ENCODE measurements at regions of chr5 and their contacts with region 1.

Region 1: DNA sequence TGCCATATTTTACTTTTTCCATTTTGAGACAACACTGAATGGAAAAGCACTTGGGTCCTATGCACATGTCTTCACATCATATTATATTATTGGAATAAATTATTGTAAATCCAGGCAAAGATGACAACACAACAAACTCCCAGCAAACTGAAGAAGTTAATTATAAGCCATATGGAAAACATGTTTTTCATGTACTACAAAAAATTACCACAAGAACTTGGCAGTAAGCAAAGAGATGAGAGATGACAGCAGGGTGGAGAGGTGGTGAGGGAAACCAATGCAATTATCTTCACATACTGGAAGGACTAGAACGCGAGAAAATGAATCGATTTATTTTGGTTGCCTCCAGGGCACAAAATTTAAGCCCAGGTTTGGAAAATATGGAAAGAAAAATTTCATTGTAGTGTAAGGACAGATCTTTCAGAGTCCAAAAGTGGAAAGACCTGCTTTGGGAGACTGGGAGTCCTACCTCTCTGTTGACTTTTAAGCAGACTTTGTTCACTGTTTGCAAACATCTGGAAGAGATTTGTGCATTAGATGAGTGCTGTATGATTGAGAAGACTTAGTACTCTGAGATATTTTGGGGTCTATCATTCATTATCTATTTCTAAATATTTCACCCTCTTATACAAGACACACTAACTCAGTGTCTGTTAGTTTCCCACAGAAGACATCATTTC is 138.0 kb downstream of the TMEM232 start:
- DNase-seq: no peak
- H3K4me3 ChIP-seq: no peak overlapping the region
- H3K27ac ChIP-seq: no peak overlapping the region
- H3K4me1 ChIP-seq: no peaks in the 10 kb centered on the region
- H3K27me3 ChIP-seq: no peaks in the 10 kb centered on the region
- CTCF ChIP-seq: no peak
- POLR2A ChIP-seq: no peak

Region 2: GRCh38 chr5:109125755-109126429 is 1462.5 kb before region 1 on chr5:
- intact Hi-C with region 1: loop called (anchors 10 kb)
- DNase-seq: no peak
- H3K4me3 ChIP-seq: no peak overlapping the region
- H3K27ac ChIP-seq: no peak overlapping the region
- H3K4me1 ChIP-seq: no peaks in the 10 kb centered on the region
- H3K27me3 ChIP-seq: no peaks in the 10 kb centered on the region
- CTCF ChIP-seq: no peak
- POLR2A ChIP-seq: no peak

Region 3: GRCh38 chr5:110638970-110639902 is 50.8 kb after region 1 on chr5:
- intact Hi-C with region 1: no loop called
- DNase-seq: no peak
- H3K4me3 ChIP-seq: no peak overlapping the region
- H3K27ac ChIP-seq: no peak overlapping the region
- H3K4me1 ChIP-seq: no peaks in the 10 kb centered on the region
- H3K27me3 ChIP-seq: no peaks in the 10 kb centered on the region
- CTCF ChIP-seq: no peak
- POLR2A ChIP-seq: no peak

Region 4: DNA sequence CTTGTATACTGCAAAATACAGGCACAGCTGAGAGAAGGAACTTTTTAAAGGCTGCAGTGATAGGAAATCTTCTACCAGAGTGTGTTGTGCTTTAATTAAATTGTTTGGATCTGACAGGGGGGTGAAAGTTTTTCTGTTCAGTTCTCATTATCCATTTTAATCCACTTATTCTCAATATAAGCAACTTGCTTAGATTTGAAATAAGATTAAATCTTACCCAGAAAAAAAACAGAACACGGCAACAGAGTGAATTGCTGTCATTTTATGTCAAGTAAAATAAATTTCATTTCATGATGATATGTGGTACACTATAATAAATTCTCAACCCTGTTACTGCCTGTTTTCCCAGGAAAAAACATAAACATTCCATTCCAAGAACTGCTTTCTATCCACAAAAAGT is 598.7 kb after region 1 on chr5:
- intact Hi-C with region 1: no loop called
- DNase-seq: no peak
- H3K4me3 ChIP-seq: no peak overlapping the region
- H3K27ac ChIP-seq: no peak overlapping the region
- H3K4me1 ChIP-seq: no peaks in the 10 kb centered on the region
- H3K27me3 ChIP-seq: no peaks in the 10 kb centered on the region
- CTCF ChIP-seq: no peak
- POLR2A ChIP-seq: no peak